Esophagus squamous epithelium (tissue), 5 donors: ENCODE measurements at regions of chr15 and their contacts with region 1.

Region 1: DNA sequence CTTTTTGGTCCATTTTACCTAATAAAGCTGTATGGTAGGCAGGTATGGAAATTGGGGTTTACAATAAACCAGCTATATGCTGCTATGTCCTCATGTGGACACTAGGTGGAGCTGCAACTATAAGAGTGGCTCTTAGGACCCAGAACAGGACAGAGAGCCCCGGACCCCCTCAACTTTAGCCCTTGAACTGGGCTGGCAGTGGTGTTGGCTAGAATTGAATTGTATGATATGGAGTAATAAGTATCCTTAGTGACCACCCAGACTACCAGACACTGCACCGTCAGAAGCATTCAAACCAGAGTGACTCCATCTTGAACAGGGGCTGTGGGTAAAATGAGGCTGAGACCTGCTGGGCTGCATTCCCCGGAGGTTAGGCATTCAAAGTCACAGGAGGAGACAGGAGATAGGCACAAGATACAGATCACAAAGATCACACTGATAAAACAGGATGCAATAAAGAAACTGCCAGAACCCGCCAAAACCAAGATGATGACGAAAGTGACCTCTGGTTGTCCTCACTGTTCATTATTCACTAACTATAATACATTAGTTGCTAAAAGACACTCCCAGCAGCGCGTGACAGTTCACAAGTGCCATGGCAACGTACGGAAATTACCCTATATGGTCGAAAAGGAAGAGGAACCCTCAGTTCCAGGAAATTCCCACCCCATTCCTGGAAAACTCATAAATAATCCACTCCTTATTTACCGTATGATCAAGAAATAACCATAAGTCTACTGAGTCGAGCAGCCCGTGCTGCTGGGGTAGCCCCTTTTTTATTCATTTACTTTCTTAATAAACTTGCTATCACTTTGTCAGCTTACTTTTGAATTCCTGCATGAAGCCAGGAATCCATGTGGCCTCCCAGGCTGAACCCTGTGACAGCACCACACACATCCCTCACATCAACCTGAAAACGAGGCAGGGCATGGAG is 68.7 kb upstream of the BLM start:
- DNase-seq: peak; percentile 19
- H3K4me3 ChIP-seq: peak overlapping the region in 1 of 4 donors; percentile 12
- H3K27ac ChIP-seq: peak overlapping the region in 3 of 4 donors; percentile 61 to 71 (median 70)
- H3K4me1 ChIP-seq: peaks cover 8 to 22% (median 10%) of the 10 kb centered on the region in 3 donors
- H3K27me3 ChIP-seq: no peaks in the 10 kb centered on the region
- CTCF ChIP-seq: peak; percentile 67 to 92 (median 90)
- POLR2A ChIP-seq: peak in 1 of 4 donors; percentile 5

Region 2: DNA sequence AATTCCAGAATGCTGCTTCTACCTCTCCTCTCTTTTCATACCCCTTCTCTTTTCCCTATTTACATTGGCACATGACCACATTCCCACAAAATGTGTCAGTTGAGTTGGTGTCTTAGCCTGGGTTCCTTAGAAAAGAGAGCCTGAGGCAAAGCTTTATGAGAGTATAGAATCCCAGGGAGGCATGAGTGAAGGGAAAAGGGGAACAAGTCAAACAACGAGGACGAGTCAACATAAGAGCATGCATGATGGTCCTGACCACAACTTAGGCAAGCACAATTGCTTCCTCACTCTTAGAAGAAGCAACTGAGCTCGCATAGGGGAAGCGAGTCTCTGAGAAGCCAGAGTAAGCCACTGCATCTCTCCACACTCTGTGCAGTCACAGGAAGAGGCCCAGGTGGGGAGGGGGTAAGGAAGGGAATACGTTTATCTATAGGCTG is 311.7 kb before region 1 on chr15:
- intact Hi-C with region 1: no loop called
- DNase-seq: no peak
- H3K4me3 ChIP-seq: no peak overlapping the region
- H3K27ac ChIP-seq: peak overlapping the region; percentile 22 to 63 (median 38)
- H3K4me1 ChIP-seq: peaks cover 0 to 50% (median 17%) of the 10 kb centered on the region in 3 donors
- H3K27me3 ChIP-seq: no peaks in the 10 kb centered on the region
- CTCF ChIP-seq: no peak
- POLR2A ChIP-seq: no peak

Region 3: GRCh38 chr15:90451053-90451850 is 197.2 kb before region 1 on chr15:
- intact Hi-C with region 1: no loop called
- DNase-seq: no peak
- H3K4me3 ChIP-seq: no peak overlapping the region
- H3K27ac ChIP-seq: no peak overlapping the region
- H3K4me1 ChIP-seq: no peaks in the 10 kb centered on the region
- H3K27me3 ChIP-seq: no peaks in the 10 kb centered on the region
- CTCF ChIP-seq: no peak
- POLR2A ChIP-seq: no peak

Region 4: DNA sequence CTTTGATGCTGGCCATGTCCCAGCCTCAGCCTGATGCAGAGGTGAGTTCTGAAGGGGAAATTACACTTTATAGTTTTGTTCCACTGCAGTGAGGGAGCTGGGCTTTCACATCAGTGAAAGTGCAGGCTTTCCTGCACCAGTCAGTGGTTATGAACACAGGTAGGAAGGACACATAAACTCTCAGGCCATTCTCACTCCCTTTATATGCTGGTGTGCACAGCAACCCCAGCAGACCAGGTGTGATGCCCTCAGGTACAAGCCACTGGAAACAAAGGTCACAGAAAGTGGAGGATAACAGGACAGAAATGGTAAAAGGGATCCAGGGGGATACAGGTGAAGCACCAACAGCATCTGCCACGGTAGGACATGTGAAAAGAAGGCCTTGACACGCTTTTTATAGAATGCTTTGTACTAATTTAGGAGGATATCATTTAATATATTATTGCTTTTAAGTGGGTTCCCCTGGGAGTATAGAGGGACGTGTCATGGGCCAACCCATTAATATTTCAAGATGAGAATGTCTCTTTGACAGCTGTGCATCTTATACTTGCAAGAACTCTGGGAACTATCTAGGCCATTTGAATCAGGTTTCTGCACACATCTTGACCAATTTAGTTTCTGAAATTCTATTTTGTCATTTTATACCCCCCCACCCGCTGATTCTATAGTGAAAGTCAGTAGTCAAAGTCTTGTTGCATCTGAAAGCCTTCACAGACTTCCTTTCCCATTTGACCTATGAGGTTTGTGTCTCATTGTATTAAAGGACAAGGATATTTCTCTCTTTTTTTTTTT is 43.8 kb after region 1 on chr15:
- intact Hi-C with region 1: loop called (anchors 5 kb)
- DNase-seq: no peak
- H3K4me3 ChIP-seq: no peak overlapping the region
- H3K27ac ChIP-seq: no peak overlapping the region
- H3K4me1 ChIP-seq: no peaks in the 10 kb centered on the region
- H3K27me3 ChIP-seq: no peaks in the 10 kb centered on the region
- CTCF ChIP-seq: no peak
- POLR2A ChIP-seq: no peak

Region 5: GRCh38 chr15:90762109-90762508 is 113.7 kb after region 1 on chr15:
- intact Hi-C with region 1: no loop called
- DNase-seq: no peak
- H3K4me3 ChIP-seq: no peak overlapping the region
- H3K27ac ChIP-seq: peak overlapping the region in 1 of 4 donors; percentile 26
- H3K4me1 ChIP-seq: no peaks in the 10 kb centered on the region
- H3K27me3 ChIP-seq: no peaks in the 10 kb centered on the region
- CTCF ChIP-seq: no peak
- POLR2A ChIP-seq: peak in 1 of 4 donors; percentile 23

Region 6: DNA sequence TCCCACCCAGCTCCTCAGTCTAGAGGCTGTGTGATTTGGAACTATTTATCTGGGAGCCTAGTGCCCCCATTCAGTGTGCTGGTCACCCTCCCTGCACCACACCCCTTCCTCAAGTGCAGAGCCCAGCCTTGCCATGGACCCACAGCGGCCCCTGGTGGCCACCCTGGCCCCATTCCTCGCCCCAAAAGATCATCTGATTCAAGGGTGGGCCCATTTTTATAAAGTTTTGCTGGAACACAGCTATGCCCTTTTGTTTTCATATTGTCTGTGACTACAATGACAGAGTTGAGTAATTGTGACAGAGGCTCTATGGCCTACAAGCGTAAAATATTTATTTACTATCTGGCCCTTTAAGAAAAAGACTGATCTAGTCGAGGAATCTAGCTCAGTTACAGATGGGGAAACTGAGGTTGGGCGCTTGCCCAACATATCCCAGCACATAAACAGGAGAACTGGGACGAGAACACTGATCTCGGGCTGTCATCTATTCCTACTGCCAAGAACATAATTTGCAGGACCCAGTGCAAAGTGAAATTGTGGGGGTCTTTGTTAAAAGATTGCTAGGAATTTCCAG is 237.7 kb after region 1 on chr15:
- intact Hi-C with region 1: loop called (anchors 5 kb)
- DNase-seq: no peak
- H3K4me3 ChIP-seq: peak overlapping the region in 3 of 4 donors; percentile 56 to 71 (median 60)
- H3K27ac ChIP-seq: peak overlapping the region; percentile 77 to 94 (median 92)
- H3K4me1 ChIP-seq: peaks cover 29 to 43% (median 37%) of the 10 kb centered on the region in 3 donors
- H3K27me3 ChIP-seq: no peaks in the 10 kb centered on the region
- CTCF ChIP-seq: peak in 5 of 6 experiments; percentile 92 to 99 (median 97)
- POLR2A ChIP-seq: no peak